ENCODE measurements at regions of chr17 and their contacts with region 1.

Region 1: GRCh38 chr17:57305903-57306504 is 49.7 kb downstream of the MSI2 start:
- DNase-seq: no peak
- H3K4me3 Mint-ChIP-seq: no peak overlapping the region
- H3K27ac Mint-ChIP-seq: no peak overlapping the region
- H3K4me1 Mint-ChIP-seq: peaks cover 24% of the 10 kb centered on the region
- H3K27me3 Mint-ChIP-seq: no peaks in the 10 kb centered on the region

Region 2: DNA sequence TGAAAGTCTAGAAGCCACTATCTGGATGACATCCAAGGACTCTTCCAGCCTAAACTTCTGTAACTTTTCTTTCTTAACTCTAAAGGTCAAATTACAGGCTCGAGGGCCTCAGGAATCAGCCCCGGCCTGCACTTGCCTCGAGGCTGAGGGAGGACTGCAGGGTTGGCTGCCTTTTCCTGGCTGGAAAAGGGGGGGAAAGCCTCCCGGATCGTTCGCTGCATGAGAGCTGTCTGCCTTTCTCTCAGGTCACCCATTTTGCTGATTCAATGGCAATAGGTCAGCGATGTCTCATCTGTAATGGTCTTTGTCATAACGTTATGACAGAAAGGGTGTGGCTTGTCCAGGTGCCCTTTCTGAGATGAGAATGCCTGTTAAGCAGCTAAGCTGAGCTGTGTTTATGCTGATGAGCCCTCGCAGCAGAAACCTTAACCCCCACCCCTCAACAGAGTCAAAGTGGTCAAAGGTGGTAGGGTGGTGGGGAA is 139.2 kb before region 1 on chr17:
- CTCF ChIA-PET with region 1: no interaction called
- POLR2A ChIA-PET with region 1: interaction called, 14 read pairs
- DNase-seq: no peak
- H3K4me3 Mint-ChIP-seq: no peak overlapping the region
- H3K27ac Mint-ChIP-seq: no peak overlapping the region
- H3K4me1 Mint-ChIP-seq: no peaks in the 10 kb centered on the region
- H3K27me3 Mint-ChIP-seq: peaks cover 9% of the 10 kb centered on the region

Region 3: GRCh38 chr17:57271821-57272220 is 34.2 kb before region 1 on chr17:
- CTCF ChIA-PET with region 1: no interaction called
- POLR2A ChIA-PET with region 1: no interaction called
- DNase-seq: no peak
- H3K4me3 Mint-ChIP-seq: no peak overlapping the region
- H3K27ac Mint-ChIP-seq: peak overlapping the region; percentile 4
- H3K4me1 Mint-ChIP-seq: peaks cover 35% of the 10 kb centered on the region
- H3K27me3 Mint-ChIP-seq: no peaks in the 10 kb centered on the region

Region 4: GRCh38 chr17:57338257-57338914 is 32.4 kb after region 1 on chr17:
- CTCF ChIA-PET with region 1: no interaction called
- POLR2A ChIA-PET with region 1: no interaction called
- DNase-seq: peak; percentile 9
- H3K4me3 Mint-ChIP-seq: no peak overlapping the region
- H3K27ac Mint-ChIP-seq: no peak overlapping the region
- H3K4me1 Mint-ChIP-seq: peaks cover 29% of the 10 kb centered on the region
- H3K27me3 Mint-ChIP-seq: no peaks in the 10 kb centered on the region